Sciatic nerve (tissue), 2 donors: ENCODE measurements at regions of chr13 and their contacts with region 1.

Region 1: DNA sequence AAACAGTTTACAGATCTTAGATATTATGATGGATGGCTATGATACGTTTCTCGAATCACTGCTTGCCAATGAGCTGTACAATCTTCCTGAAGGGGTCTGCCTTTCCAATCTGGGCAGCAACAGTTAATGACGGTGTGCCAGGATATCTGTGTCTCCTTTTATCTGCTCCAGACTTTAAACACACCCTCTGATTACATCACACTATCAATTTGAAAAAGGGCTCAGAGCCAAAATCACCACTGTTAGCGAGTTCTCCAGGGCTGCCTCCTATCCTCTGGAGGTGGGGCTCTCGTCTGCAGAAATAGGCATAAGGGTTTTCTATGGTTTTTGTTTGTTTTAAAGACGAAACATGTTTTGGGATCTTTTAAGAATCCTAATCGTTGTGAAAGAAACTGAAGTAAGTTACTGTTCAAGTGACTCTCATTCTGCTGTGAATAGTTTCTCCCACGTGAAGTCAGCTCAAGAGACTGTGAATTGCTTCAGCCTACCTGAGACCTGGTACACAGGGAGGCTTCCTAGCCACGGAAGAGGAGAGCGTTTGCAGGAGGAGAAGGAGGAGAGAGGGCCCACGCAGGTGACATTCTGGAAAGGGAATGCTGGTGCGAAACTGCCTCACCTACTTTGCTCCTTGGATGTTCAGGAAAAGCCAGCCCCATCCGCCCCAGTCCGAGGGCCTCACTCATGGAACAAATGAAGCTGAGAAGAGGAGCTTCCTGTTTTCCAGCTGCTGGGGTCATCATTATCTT is 15.2 kb upstream of the GJA3 start:
- DNase-seq: no peak
- ATAC-seq: peak; percentile 63

Region 2: DNA sequence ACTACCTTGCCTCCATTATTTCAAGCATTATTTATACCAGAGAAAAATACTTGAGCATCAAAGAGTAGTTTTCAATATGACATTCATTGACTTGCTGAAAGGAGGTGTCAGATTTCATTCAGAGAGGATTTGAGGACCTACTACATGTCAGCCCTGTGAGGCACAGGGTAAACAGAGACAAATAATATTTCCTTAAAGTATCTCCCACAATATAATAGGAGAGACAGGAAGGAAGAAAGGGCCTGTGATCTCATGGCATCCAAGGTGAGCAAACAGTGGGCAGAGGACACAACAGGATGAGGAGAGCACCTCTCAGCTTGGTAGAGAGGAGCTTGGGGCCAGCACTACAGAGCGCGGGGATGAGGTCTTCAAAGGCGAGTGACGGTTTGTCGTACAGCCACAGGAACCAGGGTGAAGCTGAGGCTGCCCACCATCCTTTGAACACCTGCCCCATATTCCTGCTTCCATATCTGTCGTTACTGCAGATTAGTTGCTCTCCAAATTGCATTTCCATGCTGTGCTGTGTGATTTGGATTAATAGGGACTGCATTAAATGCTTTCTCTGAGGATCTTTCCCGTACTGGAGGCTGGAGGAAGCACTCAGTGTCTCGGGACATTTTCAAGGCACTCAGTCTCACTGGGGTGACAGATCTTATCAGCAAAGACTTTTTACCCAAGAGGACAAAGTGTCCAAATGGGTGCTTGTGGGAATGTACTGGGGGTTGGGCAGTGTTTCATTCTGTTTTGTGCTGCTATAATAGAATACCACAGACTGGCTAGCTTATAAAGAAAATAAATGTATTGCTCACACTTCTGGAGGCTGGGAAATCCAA is 74.4 kb before region 1 on chr13:
- intact Hi-C with region 1: loop called (anchors 2 kb)
- DNase-seq: no peak
- ATAC-seq: no peak

Region 3: DNA sequence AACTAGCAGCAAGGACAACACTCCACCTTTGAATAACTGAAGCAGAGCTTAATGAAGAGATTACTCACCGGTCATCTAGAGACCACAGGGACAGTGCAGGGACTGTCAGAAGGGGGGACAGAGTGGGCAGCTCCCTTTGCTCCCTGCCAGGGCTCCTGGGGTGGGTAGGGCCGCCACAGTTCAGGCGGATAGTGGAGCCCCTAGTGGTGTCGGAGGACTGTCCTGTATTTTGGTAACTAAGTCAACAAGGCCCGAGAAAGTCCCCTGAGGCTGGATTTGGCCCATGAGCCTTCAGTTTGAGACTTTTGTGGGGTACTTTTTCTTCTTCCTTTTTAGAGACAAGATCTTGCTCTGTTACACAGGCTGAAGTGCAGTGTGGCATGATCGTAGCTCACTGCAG is 59.9 kb before region 1 on chr13:
- intact Hi-C with region 1: no loop called
- DNase-seq: no peak
- ATAC-seq: no peak